Activated CD8-positive, alpha-beta T cell treated with anti-CD3 and anti-CD28 coated beads, Interleukin-2, amount 10 ng/mL, durations not matched to agents 7 days and 5 days (primary cell): ENCODE measurements at regions of chr6 and their contacts with region 1.

Region 1: DNA sequence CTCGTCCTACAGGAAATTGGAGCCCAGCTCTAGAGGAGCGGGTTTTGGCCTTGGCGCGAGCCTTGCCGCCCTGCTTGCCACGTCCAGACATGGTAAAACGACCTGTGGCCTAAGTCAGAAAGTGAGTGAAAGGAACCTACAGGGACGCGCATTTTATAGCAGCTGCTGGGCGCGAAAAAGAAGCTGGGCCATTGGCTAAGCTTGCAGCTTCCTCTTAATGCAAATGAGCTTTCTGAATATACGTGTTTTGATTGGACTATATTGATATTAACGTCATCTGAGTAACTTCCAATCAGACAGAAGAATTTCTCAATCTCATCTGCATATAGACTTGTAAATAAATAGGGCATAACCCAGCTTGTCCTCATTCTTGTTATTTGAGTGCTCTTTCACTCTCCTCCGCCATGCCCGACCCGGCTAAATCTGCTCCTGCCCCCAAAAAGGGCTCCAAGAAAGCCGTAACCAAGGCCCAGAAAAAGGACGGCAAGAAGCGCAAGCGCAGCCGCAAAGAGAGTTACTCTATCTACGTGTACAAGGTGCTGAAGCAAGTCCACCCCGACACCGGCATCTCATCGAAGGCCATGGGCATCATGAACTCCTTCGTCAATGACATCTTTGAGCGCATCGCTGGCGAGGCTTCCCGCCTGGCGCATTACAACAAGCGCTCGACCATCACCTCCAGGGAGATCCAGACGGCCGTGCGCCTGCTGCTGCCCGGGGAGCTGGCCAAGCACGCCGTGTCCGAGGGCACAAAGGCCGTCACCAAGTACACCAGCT is 18.9 kb downstream of the OR2B2 start:
- DNase-seq: peak; percentile 96
- ATAC-seq: peak; percentile 55
- H3K4me3 Mint-ChIP-seq: no peak overlapping the region
- H3K27ac Mint-ChIP-seq: no peak overlapping the region
- H3K4me1 Mint-ChIP-seq: peaks cover 56% of the 10 kb centered on the region
- H3K27me3 Mint-ChIP-seq: no peaks in the 10 kb centered on the region

Region 2: DNA sequence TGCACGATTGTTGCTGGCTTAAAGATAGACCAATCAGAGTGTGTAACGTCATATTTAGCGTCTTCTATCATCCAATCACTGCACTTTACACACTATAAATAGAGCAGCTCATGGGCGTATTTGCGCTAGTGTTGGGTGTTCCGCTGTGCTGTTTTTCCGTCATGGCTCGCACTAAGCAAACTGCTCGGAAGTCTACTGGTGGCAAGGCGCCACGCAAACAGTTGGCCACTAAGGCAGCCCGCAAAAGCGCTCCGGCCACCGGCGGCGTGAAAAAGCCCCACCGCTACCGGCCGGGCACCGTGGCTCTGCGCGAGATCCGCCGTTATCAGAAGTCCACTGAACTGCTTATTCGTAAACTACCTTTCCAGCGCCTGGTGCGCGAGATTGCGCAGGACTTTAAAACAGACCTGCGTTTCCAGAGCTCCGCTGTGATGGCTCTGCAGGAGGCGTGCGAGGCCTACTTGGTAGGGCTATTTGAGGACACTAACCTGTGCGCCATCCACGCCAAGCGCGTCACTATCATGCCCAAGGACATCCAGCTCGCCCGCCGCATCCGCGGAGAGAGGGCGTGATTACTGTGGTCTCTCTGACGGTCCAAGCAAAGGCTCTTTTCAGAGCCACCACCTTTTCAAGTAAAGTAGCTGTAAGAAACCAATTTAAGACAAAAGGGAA is 1872.8 kb before region 1 on chr6:
- CTCF ChIA-PET with region 1: no interaction called
- POLR2A ChIA-PET with region 1: interaction called, 51 read pairs
- DNase-seq: peak; percentile 88
- ATAC-seq: peak; percentile 51
- H3K4me3 Mint-ChIP-seq: peak overlapping the region; percentile 96
- H3K27ac Mint-ChIP-seq: peak overlapping the region; percentile 100
- H3K4me1 Mint-ChIP-seq: peaks cover 65% of the 10 kb centered on the region
- H3K27me3 Mint-ChIP-seq: no peaks in the 10 kb centered on the region

Region 3: DNA sequence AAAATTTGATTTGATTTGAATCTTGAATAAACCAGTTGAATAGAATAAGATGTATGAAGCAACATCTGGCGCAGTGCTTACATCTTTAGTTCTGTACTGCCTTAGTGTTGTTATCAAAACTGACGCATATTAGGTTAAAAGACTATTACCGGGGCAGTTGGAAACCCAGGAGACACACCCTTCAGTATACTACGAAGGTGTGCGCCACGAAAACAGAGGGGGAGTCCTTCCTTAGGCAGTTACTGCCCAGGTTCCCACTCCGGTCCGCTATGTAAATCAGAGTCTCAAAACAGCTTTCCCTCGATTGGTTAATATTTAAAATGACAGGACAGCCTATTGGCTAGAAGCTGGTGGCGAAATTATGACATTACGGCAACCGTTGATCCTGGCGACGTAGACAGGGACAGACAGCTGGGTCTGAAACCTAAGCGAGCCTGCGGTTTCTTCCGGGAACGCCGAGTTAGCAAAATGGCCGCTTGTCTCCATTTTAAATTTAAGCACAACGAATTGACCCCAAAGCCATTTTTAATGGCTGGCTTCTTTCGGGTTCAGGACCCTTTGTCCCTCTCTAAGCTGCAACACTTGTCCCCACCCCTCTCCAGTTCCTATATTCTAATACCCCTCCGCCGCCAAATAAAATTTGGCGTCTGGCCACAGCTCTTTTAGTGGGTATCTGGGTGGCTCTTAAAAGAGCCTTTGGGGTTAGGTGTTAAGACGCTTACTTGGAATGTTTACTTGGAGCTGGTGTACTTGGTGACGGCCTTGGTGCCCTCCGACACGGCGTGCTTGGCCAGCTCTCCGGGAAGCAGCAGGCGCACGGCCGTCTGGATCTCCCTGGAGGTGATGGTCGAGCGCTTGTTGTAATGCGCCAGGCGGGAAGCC is 1770.2 kb before region 1 on chr6:
- CTCF ChIA-PET with region 1: no interaction called
- POLR2A ChIA-PET with region 1: interaction called, 27 read pairs
- DNase-seq: peak; percentile 98
- ATAC-seq: peak; percentile 50
- H3K4me3 Mint-ChIP-seq: peak overlapping the region; percentile 95
- H3K27ac Mint-ChIP-seq: peak overlapping the region; percentile 100
- H3K4me1 Mint-ChIP-seq: peaks cover 44% of the 10 kb centered on the region
- H3K27me3 Mint-ChIP-seq: peaks cover 1% of the 10 kb centered on the region

Region 4: DNA sequence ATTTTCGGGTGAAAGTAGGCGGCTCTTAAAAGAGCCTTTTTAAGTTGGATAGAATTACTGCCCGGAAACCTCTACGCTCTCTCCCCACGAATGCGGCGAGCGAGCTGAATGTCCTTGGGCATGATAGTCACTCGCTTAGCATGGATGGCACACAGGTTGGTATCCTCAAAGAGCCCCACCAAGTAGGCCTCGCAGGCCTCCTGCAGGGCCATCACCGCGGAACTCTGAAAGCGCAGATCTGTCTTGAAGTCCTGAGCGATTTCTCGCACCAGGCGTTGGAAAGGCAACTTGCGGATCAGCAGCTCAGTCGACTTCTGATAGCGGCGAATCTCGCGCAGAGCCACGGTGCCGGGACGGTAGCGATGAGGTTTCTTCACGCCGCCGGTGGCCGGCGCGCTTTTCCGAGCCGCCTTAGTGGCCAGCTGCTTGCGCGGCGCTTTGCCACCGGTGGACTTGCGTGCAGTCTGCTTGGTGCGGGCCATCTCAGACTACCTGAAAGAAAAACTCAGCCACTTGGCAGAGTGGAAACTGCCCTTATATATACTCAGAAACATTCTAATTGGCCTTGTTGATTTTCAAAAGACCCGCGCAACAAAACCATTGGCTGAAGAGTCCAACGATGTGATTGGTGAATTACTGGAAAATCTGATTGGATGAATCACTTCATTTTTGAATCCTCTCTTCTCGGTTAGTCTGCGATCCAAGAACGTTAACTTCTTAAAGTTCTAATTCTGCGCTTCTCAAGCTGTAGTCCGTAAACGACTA is 1622.2 kb before region 1 on chr6:
- CTCF ChIA-PET with region 1: no interaction called
- POLR2A ChIA-PET with region 1: interaction called, 27 read pairs
- DNase-seq: peak; percentile 91
- ATAC-seq: peak; percentile 47
- H3K4me3 Mint-ChIP-seq: no peak overlapping the region
- H3K27ac Mint-ChIP-seq: no peak overlapping the region
- H3K4me1 Mint-ChIP-seq: peaks cover 40% of the 10 kb centered on the region
- H3K27me3 Mint-ChIP-seq: no peaks in the 10 kb centered on the region

Region 5: DNA sequence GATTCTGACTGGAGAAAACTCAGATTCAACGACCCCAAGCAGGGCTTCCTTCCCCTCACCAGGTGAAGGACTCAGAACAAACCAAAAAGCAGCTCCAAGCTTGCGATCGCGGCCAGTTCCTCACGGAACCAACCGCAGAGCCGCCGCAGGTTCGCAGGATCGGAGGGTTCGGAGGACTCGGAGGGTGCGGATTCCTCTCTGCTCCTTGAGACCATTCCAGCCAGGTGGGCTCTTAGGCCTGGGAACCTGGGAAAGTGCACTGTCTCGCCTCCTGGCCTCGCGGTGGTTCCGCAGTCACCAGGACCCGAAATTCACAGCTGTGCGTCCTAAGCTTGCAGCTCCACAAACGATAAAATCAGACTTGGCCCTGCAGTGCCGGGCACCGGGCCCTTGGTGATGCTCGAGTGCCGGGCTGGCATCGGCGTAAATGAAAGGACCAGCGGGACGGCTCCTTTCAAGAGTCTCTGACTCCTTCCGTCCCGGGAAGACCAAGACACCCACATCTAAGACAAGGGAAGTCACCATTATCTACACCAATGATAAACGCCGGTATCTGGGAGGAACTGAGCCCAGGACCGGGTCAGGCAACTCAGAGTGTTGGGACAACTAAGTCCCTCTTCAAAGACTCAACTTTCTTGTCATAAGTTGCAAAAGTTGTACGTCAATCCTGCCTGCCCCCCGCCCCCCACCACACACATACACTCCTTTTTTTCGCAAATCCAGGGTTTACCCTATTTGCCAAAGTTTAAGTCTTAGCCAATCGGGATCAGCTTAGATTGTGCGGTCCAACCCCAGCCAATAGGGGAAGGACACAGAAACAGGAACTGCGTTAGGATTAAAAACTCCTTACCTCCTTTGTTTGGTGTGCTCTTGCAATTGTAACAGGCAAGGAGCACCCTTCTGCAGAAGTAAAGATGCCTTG is 715.5 kb before region 1 on chr6:
- CTCF ChIA-PET with region 1: interaction called, 12 read pairs
- POLR2A ChIA-PET with region 1: interaction called, 5 read pairs
- DNase-seq: peak; percentile 84
- ATAC-seq: peak; percentile 88
- H3K4me3 Mint-ChIP-seq: peak overlapping the region; percentile 92
- H3K27ac Mint-ChIP-seq: peak overlapping the region; percentile 81
- H3K4me1 Mint-ChIP-seq: peaks cover 17% of the 10 kb centered on the region
- H3K27me3 Mint-ChIP-seq: peaks cover 30% of the 10 kb centered on the region

Region 6: DNA sequence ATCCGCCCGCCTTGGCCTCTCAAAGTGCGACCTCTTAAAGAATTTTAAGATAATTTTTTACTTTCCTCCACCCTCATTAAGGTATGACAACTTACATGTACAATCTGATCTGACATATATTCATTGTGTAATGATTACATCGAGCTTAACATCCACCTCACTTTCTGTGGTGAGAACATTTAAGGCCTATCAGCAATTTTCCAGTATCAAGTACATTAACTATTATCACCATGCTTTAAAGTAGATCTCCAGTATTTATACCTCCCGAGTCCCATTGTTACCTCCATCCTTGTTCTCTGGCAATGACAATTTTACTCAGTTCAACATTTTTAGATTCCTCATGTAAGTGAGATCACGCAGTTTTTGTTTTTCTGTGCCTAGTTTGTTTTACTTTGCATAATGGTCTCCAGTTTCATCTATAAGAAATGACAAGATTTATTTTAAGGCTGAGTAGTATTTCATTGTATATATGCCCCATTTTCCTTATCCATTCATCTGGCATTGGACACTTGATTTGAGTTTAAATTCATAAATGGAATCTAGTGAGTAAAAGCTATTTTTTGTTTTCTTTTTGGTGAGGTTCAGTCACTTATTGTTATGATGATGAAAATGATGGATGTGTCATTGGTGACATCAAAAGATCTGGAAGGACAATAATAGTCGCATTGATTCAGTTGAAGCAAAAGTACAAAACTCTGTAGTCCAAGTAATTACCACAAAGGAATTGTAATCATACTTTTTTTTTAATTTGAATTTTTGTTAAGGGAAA is 68.0 kb before region 1 on chr6:
- CTCF ChIA-PET with region 1: interaction called, 45 read pairs
- POLR2A ChIA-PET with region 1: interaction called, 325 read pairs
- DNase-seq: no peak
- ATAC-seq: peak; percentile 3
- H3K4me3 Mint-ChIP-seq: peak overlapping the region; percentile 93
- H3K27ac Mint-ChIP-seq: peak overlapping the region; percentile 99
- H3K4me1 Mint-ChIP-seq: peaks cover 45% of the 10 kb centered on the region
- H3K27me3 Mint-ChIP-seq: no peaks in the 10 kb centered on the region

Region 7: GRCh38 chr6:27879837-27880236 is 13.4 kb before region 1 on chr6:
- CTCF ChIA-PET with region 1: interaction called, 46 read pairs
- POLR2A ChIA-PET with region 1: interaction called, 1,677 read pairs
- DNase-seq: no peak
- ATAC-seq: no peak
- H3K4me3 Mint-ChIP-seq: no peak overlapping the region
- H3K27ac Mint-ChIP-seq: peak overlapping the region; percentile 63
- H3K4me1 Mint-ChIP-seq: peaks cover 13% of the 10 kb centered on the region
- H3K27me3 Mint-ChIP-seq: no peaks in the 10 kb centered on the region

Region 8: DNA sequence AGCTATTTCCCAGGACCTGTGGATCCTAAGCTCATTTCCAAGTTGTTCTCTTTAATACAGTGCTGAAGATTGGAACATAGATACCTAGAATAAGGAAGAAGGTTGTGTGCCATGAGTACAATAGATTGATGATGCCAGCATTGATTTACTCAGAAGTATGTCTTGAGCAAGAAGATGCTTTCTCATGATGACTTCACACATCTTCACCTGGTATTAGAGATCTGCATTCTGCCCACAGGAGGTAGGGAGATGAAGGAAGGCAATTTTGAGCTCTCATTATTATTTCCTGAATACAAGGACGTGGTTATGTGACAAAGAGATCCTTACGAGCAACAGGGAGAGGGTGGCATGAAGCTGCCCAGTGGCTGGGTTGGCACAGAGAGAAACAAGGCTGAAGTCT is 167.2 kb after region 1 on chr6:
- CTCF ChIA-PET with region 1: no interaction called
- POLR2A ChIA-PET with region 1: no interaction called
- DNase-seq: no peak
- ATAC-seq: no peak
- H3K4me3 Mint-ChIP-seq: no peak overlapping the region
- H3K27ac Mint-ChIP-seq: no peak overlapping the region
- H3K4me1 Mint-ChIP-seq: no peaks in the 10 kb centered on the region
- H3K27me3 Mint-ChIP-seq: peaks cover 17% of the 10 kb centered on the region